ENCODE measurements at regions of chr20 and their contacts with region 1.

Region 1: DNA sequence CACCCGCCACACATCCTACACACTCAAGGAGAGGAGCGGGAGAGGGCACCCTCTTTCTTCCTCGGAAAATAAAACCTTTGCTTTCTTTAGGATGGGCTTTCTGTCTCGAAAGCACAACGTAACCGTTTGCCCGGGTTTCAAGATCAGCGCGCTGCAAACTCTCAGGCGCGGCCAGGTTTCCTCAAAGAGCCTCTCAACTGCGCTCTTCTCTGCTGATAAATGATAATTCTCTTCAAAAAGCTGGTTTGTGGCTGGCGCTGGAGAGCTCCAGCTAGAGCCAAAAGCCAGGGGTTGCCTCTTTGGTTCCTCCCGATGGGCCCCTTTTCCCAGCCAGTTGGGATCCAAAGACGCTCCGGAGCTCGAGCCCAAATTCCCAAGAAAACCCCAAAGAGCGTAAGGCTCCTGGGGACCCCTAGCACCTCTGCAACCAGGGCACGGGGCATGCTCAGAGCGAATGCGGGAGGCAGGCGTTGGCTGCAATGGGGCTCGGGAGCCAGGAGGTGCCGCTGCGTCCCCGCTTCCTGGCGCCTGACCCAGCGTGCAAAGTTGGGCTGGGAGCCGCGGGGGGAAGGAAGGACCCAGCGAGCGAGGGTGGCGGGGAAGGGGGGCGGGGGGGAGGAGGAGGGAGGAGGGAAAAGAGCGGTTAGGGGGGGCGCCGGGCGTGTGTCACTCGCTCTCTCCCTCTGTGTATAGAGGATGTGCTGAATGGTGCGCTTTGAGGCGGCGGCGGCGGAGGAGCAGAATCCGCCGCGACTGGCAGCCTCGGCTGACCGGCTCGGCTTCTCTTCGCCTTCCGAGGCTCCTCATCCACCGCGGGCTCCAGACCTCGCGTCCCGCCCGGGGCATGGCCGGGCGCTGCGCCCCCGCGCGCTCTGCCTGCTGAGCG is at the start of gene PLCB1:
- DNase-seq: peak; percentile 89
- H3K4me3 ChIP-seq: peak within 1 kb of the TSS; percentile 82 to 87
- H3K27ac ChIP-seq: peak within 1 kb of the TSS; percentile 82 to 88
- H3K4me1 ChIP-seq: no peaks in the 10 kb centered on the region
- H3K27me3 ChIP-seq: no peaks in the 10 kb centered on the region
- CTCF ChIP-seq: peak; percentile 73 to 95 (median 92)
- POLR2A ChIP-seq: no peak
- total RNA-seq, gene PLCB1: 24.3 to 26.3 TPM

Region 2: GRCh38 chr20:7637184-7637583 is 494.7 kb before region 1 on chr20:
- intact Hi-C with region 1: no loop called
- DNase-seq: no peak
- H3K4me3 ChIP-seq: no peak overlapping the region
- H3K27ac ChIP-seq: no peak overlapping the region
- H3K4me1 ChIP-seq: no peaks in the 10 kb centered on the region
- H3K27me3 ChIP-seq: no peaks in the 10 kb centered on the region
- CTCF ChIP-seq: no peak
- POLR2A ChIP-seq: no peak

Region 3: DNA sequence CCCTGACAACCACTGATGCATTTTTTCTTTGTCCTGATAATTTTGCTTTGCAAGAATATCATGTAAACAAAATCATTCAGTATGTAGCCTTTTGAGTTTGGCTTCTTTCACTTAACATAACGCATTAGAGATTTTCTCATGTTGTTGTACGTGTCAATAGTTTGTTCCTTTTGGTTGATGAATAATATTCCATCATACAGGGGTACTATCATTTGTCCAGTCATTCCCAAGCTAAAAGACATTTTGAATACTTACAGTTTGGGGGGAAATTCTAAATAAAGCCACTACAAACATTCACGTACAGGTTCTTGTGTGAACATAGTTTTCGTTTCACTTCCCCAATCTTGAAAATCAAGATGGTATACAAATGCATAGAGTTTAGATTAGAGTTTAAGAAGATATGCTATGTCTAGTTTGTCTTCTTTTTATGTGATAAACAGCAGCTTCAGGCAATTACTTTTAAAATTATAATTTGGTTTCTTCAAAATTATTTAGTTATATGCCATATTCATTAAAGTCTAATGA is 196.8 kb before region 1 on chr20:
- intact Hi-C with region 1: loop called (anchors 10 kb)
- DNase-seq: no peak
- H3K4me3 ChIP-seq: no peak overlapping the region
- H3K27ac ChIP-seq: no peak overlapping the region
- H3K4me1 ChIP-seq: no peaks in the 10 kb centered on the region
- H3K27me3 ChIP-seq: no peaks in the 10 kb centered on the region
- CTCF ChIP-seq: no peak
- POLR2A ChIP-seq: no peak

Region 4: GRCh38 chr20:8043687-8044282 is 88.1 kb before region 1 on chr20:
- intact Hi-C with region 1: loop called (anchors 2 kb)
- DNase-seq: peak; percentile 60
- H3K4me3 ChIP-seq: no peak overlapping the region
- H3K27ac ChIP-seq: no peak overlapping the region
- H3K4me1 ChIP-seq: no peaks in the 10 kb centered on the region
- H3K27me3 ChIP-seq: no peaks in the 10 kb centered on the region
- CTCF ChIP-seq: peak; percentile 50 to 86 (median 76)
- POLR2A ChIP-seq: no peak

Region 5: GRCh38 chr20:8215361-8215781 is 83.5 kb after region 1 on chr20:
- intact Hi-C with region 1: loop called (anchors 5 kb)
- DNase-seq: peak; percentile 20
- H3K4me3 ChIP-seq: no peak overlapping the region
- H3K27ac ChIP-seq: no peak overlapping the region
- H3K4me1 ChIP-seq: no peaks in the 10 kb centered on the region
- H3K27me3 ChIP-seq: no peaks in the 10 kb centered on the region
- CTCF ChIP-seq: no peak
- POLR2A ChIP-seq: no peak

Region 6: GRCh38 chr20:8344106-8344505 is 212.3 kb after region 1 on chr20:
- intact Hi-C with region 1: no loop called
- DNase-seq: no peak
- H3K4me3 ChIP-seq: no peak overlapping the region
- H3K27ac ChIP-seq: no peak overlapping the region
- H3K4me1 ChIP-seq: peaks cover 8% of the 10 kb centered on the region
- H3K27me3 ChIP-seq: no peaks in the 10 kb centered on the region
- CTCF ChIP-seq: no peak
- POLR2A ChIP-seq: no peak

Region 7: DNA sequence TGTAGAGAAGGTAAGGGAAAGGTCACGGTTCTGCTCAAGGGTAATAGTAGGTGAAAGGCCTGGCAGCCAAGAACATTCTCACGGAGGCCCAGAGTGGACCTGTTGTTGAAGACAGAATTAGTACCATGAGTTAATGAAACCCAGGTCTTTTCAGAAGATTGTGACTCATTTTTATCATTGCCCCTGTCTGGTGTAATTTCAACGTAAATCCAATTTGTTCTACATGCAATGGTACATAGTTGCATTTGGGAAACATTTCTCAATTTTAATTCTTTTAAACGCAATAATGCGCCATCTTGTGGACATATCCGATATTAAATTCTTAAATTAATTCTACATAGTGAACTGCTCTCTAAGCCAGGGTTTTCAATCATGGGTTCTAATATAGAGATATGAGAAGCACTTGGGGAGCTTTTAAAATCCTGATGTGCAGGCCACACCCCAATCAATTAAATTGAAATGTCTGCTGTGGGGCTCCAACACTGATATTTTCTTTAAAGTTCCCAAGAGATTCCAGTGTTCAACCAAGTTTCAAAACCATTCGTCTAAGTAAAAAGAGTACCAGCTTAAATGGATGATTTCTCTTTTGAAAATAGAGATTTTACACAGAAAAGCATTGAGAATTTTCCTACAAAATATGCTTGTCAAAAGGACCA is 257.7 kb after region 1 on chr20:
- intact Hi-C with region 1: loop called (anchors 2 kb)
- DNase-seq: no peak
- H3K4me3 ChIP-seq: no peak overlapping the region
- H3K27ac ChIP-seq: no peak overlapping the region
- H3K4me1 ChIP-seq: no peaks in the 10 kb centered on the region
- H3K27me3 ChIP-seq: no peaks in the 10 kb centered on the region
- CTCF ChIP-seq: peak; percentile 47 to 78 (median 68)
- POLR2A ChIP-seq: no peak

Region 8: GRCh38 chr20:8722276-8722928 is 590.6 kb after region 1 on chr20:
- intact Hi-C with region 1: loop called (anchors 1 kb)
- DNase-seq: peak; percentile 32
- H3K4me3 ChIP-seq: no peak overlapping the region
- H3K27ac ChIP-seq: no peak overlapping the region
- H3K4me1 ChIP-seq: no peaks in the 10 kb centered on the region
- H3K27me3 ChIP-seq: no peaks in the 10 kb centered on the region
- CTCF ChIP-seq: peak; percentile 60 to 80 (median 72)
- POLR2A ChIP-seq: no peak